Endothelial cell of umbilical vein (primary cell): ENCODE measurements at regions of chr7 and their contacts with region 1.

Region 1: DNA sequence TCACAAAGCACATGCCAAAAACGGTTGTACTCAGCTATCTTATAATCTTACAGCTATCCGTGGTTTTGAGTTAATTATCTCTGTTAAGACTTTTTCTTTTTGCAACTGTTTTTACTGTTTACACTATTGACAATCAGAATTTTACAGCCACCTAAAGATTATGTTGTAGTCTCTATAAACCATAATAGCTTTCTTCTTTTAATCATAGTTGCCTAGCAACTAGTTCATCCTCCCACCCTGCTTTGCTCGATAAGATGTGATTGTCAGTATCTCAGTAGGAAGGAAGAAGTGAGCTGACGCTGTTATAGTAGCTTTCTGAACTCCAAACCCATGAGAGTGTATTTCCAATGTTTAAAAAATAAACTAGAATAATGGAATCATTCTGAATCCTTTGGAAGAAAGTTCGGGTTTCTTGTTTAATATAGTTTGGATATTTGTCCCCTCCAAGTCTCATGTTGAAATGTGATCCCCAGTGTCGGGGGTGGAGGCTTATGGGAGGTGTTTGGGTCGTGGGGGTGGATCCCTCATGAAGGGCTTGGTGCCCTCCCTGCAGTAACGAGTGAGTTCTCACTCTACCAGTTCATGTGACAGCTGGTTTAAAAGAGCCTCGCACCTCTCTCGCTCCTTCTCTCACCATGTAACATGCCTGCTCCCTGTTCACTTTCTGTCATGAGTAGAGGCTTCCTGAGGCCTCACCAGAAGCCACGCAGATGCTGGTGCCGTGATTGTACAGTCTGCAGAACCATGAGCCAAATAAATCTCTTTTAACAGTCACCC is 68.1 kb downstream of the SVOPL start:
- DNase-seq: no peak
- H3K4me3 ChIP-seq: no peak overlapping the region
- H3K27ac ChIP-seq: no peak overlapping the region
- H3K4me1 ChIP-seq: no peaks in the 10 kb centered on the region
- H3K27me3 ChIP-seq: no peaks in the 10 kb centered on the region
- CTCF ChIP-seq: no peak
- POLR2A ChIP-seq: no peak

Region 2: GRCh38 chr7:138665249-138665648 is 32.2 kb after region 1 on chr7:
- CTCF ChIA-PET with region 1: no interaction called
- POLR2A ChIA-PET with region 1: no interaction called
- dilution Hi-C with region 1: no loop called
- intact Hi-C with region 1: loop called (anchors 1 kb)
- DNase-seq: no peak
- H3K4me3 ChIP-seq: no peak overlapping the region
- H3K27ac ChIP-seq: no peak overlapping the region
- H3K4me1 ChIP-seq: no peaks in the 10 kb centered on the region
- H3K27me3 ChIP-seq: peaks cover 2 to 3% of the 10 kb centered on the region in 2 experiments
- CTCF ChIP-seq: no peak
- POLR2A ChIP-seq: no peak